ENCODE measurements at regions of chr17 and their contacts with region 1.

Region 1: GRCh38 chr17:16449121-16449570 is 33.8 kb downstream of the TRPV2 start:
- DNase-seq: no peak
- ATAC-seq: no peak
- H3K4me3 Mint-ChIP-seq: no peak overlapping the region
- H3K27ac Mint-ChIP-seq: no peak overlapping the region
- H3K4me1 Mint-ChIP-seq: peaks cover 28% of the 10 kb centered on the region
- H3K27me3 Mint-ChIP-seq: no peaks in the 10 kb centered on the region

Region 2: GRCh38 chr17:16438557-16439302 is 10.4 kb before region 1 on chr17:
- CTCF ChIA-PET with region 1: interaction called, 27 read pairs
- POLR2A ChIA-PET with region 1: interaction called, 9 read pairs
- DNase-seq: peak; percentile 97
- ATAC-seq: peak; percentile 90
- H3K4me3 Mint-ChIP-seq: peak overlapping the region; percentile 100
- H3K27ac Mint-ChIP-seq: peak overlapping the region; percentile 99
- H3K4me1 Mint-ChIP-seq: peaks cover 49% of the 10 kb centered on the region
- H3K27me3 Mint-ChIP-seq: no peaks in the 10 kb centered on the region

Region 3: GRCh38 chr17:16529906-16530305 is 80.8 kb after region 1 on chr17:
- CTCF ChIA-PET with region 1: interaction called, 13 read pairs
- POLR2A ChIA-PET with region 1: no interaction called
- DNase-seq: no peak
- ATAC-seq: no peak
- H3K4me3 Mint-ChIP-seq: no peak overlapping the region
- H3K27ac Mint-ChIP-seq: no peak overlapping the region
- H3K4me1 Mint-ChIP-seq: peaks cover 18% of the 10 kb centered on the region
- H3K27me3 Mint-ChIP-seq: peaks cover 36% of the 10 kb centered on the region

Region 4: DNA sequence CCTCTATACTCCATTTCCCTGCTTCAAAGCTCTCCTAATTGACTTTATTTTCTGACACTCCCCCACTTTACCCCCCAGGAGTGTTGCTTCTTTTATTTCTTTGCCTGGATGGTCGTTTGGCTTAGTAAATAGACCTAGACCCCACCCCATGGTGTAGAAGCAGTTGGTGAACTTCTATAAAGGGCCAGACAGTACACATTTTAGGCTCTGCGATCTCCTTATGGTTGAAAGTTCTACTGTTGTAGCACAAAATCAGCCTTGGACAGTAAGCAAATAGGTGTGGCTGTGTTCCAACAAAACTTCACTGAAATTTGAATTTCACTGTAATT is 87.9 kb after region 1 on chr17:
- CTCF ChIA-PET with region 1: interaction called, 13 read pairs
- POLR2A ChIA-PET with region 1: no interaction called
- DNase-seq: no peak
- ATAC-seq: no peak
- H3K4me3 Mint-ChIP-seq: peak overlapping the region; percentile 95
- H3K27ac Mint-ChIP-seq: peak overlapping the region; percentile 99
- H3K4me1 Mint-ChIP-seq: peaks cover 30% of the 10 kb centered on the region
- H3K27me3 Mint-ChIP-seq: no peaks in the 10 kb centered on the region

Region 5: GRCh38 chr17:16589097-16589969 is 140.2 kb after region 1 on chr17:
- CTCF ChIA-PET with region 1: interaction called, 14 read pairs
- POLR2A ChIA-PET with region 1: no interaction called
- DNase-seq: peak; percentile 93
- ATAC-seq: peak; percentile 92
- H3K4me3 Mint-ChIP-seq: peak overlapping the region; percentile 69
- H3K27ac Mint-ChIP-seq: no peak overlapping the region
- H3K4me1 Mint-ChIP-seq: peaks cover 14% of the 10 kb centered on the region
- H3K27me3 Mint-ChIP-seq: peaks cover 43% of the 10 kb centered on the region